Tibial artery (tissue), 4 donors: ENCODE measurements at regions of chr10 and their contacts with region 1.

Region 1: DNA sequence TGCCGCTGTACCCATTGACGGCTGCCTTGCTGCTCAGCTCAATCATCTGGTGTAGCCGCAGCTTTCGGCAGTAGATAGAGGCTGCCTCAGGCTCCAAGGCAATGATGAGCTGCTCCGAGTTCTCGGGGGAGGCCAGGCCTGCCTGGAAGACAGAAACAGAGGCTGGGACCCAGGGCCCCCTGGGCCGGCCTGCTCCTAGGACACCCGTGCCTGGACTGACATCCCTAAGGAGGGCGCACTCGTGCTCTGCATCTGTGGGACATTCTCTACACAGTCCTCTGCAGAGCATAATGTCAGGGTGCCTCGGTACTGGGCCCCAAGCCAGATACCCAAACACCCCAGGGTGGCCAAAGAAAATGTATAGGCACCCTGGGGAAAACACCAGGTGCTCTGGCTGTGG is 58.5 kb downstream of the HSPA12A start:
- DNase-seq: no peak
- H3K4me3 ChIP-seq: no peak overlapping the region
- H3K27ac ChIP-seq: no peak overlapping the region
- H3K4me1 ChIP-seq: peaks cover 0 to 18% (median 11%) of the 10 kb centered on the region in 4 donors
- H3K27me3 ChIP-seq: no peaks in the 10 kb centered on the region
- CTCF ChIP-seq: no peak

Region 2: DNA sequence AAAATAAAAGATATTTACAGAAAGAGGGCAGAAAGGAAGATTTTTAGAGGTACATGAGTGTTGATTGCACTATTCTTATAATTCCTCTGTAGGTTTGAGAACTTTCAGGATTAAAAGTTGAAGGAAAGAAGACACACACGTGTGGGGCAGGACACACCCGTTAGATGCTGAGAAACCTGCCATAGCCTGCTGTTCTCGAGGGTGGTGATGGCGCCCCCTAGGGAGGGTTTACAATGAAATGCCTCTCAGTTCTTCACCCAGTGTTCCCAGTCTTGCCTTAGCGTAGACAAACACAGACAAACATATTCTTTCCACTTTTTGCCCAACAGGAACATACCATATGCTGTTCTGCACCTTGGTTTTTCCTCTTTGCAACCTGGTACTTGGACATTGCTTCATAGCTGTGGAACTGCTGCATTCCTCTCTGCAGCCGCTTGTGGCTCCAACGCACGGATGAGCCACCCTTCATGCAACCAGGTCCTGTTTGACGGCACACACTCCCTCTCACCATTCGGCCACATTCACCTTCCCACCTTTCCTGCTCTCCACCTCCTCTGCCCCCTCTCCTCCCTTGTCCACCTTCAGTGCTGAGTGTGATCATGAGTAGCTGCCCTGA is 81.8 kb after region 1 on chr10:
- intact Hi-C with region 1: loop called (anchors 5 kb)
- DNase-seq: peak in 1 of 2 donors; percentile 66
- H3K4me3 ChIP-seq: no peak overlapping the region
- H3K27ac ChIP-seq: no peak overlapping the region
- H3K4me1 ChIP-seq: no peaks in the 10 kb centered on the region
- H3K27me3 ChIP-seq: peaks cover 0 to 13% of the 10 kb centered on the region in 2 donors
- CTCF ChIP-seq: peak; percentile 16 to 37

Region 3: GRCh38 chr10:116787893-116788665 is 104.3 kb after region 1 on chr10:
- intact Hi-C with region 1: loop called (anchors 2 kb)
- DNase-seq: peak; percentile 74 to 81
- H3K4me3 ChIP-seq: peak overlapping the region; percentile 15 to 38
- H3K27ac ChIP-seq: no peak overlapping the region
- H3K4me1 ChIP-seq: peaks cover 0 to 10% (median 7%) of the 10 kb centered on the region in 4 donors
- H3K27me3 ChIP-seq: peaks cover 0 to 9% of the 10 kb centered on the region in 2 donors
- CTCF ChIP-seq: peak; percentile 97 to 99

Region 4: GRCh38 chr10:116848032-116848943 is 164.5 kb after region 1 on chr10:
- intact Hi-C with region 1: no loop called
- DNase-seq: no peak
- H3K4me3 ChIP-seq: peak overlapping the region; percentile 57 to 66
- H3K27ac ChIP-seq: no peak overlapping the region
- H3K4me1 ChIP-seq: peaks cover 0 to 23% (median 10%) of the 10 kb centered on the region in 4 donors
- H3K27me3 ChIP-seq: peaks cover 0 to 3% of the 10 kb centered on the region in 2 donors
- CTCF ChIP-seq: no peak